Adrenal gland (tissue), 19 donors: ENCODE measurements at regions of chr15 and their contacts with region 1.

Region 1: DNA sequence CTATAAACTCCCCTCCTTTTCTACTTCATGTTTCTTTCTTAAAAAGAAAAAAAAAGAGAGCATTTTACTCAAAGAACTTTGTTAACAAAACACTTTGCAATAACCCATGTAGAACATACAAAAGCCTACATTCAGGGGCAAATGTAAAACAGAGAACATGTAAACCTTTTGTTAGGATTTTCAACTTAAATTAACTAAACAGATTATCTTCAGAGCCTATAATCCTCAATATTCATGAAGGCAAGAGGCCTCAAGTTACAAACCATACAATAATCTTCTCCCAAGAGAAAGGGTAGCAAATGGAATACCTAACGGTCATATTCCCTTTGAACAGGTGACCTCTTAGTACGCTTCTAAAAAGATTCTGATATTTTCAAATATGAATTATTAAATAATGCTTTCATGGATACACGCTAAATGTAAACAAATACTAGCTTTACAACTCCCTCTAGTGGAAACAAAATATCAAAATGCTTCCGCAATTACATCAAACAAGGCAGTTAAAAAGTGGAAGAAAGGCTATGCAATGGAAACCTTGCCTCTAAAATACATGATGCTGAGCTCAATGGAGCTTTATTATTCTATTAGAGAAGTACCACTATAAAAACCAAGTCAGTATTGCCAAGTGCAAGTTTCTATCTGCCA is 9.9 kb downstream of the CEP152 start:
- DNase-seq: no peak
- H3K4me3 ChIP-seq: no peak overlapping the region
- H3K27ac ChIP-seq: peak overlapping the region in 1 of 5 donors; percentile 3
- H3K4me1 ChIP-seq: peaks cover 0 to 7% of the 10 kb centered on the region in 2 donors
- H3K27me3 ChIP-seq: no peaks in the 10 kb centered on the region
- CTCF ChIP-seq: peak; percentile 25 to 69 (median 55)
- POLR2A ChIP-seq: no peak

Region 2: DNA sequence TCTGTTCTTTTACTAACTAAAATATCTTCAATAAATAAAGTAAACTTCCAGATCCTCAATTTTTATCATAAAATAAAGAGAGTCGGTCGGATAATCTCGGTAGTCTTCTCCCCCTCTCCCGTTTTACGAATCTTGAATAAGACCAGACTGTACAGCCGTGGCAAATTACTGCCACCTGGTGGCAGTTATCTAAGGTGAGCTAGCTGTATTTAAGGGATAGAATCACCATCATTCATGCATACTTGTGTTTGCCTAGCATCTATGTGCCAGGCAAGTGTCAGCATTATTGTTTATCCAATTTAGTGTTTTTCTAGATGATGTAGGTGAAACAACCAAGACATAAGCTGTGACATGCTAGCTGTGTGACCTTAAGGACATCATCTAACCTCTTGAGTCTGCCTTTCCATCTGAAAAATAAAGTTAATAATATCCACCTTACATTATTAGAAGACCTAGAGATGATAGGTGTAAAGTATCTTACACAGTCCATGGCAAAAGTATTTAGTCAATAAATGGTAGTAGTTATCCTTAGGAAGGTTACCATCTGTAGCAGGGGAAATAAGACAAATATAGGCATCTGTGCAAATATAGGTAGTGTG is 448.4 kb before region 1 on chr15:
- intact Hi-C with region 1: loop called in 1 of 2 experiments (anchors 10 kb)
- DNase-seq: peak; percentile 46 to 75 (median 59)
- H3K4me3 ChIP-seq: no peak overlapping the region
- H3K27ac ChIP-seq: no peak overlapping the region
- H3K4me1 ChIP-seq: no peaks in the 10 kb centered on the region
- H3K27me3 ChIP-seq: no peaks in the 10 kb centered on the region
- CTCF ChIP-seq: peak; percentile 44 to 79 (median 66)
- POLR2A ChIP-seq: no peak

Region 3: DNA sequence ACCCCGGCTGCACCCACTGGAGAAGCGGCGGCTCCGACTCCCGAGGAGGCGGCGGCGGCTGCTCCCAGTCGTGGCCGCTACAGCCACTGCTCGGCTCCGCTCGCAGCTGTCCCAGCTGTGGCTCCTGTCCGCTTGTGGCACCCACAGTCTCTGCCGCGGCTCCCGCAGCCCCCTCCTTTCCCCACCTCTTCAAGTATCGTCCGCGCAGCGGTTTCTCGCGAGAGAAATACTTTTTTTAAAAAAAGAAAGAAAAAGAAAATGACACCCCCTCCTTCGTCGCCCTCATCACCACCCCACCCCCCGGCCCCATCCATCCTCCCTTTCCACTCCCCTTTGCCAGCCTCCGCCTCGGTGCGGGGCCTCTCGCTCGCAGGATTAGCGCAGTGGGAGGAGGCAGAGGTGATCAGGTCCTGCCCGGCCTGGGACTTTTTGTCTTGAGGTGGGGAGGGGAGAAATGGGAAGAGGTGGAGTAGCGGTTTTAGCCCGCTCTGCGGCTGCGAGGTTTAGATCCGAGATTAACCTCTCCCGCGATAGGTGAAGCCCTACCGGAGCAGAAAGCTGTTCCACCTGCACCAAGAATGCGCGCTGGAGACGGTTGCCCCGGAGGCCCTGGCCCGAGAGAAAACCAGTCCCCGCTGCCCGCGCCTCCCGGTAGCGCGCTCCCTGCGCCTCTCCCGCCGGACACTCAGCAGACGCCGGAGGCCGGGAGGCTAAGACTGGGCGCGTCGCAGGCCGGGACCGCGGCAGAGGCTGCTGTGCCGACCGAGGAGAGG is 155.2 kb before region 1 on chr15 and contains the start of gene FBN1:
- intact Hi-C with region 1: loop called in 1 of 2 experiments (anchors 10 kb)
- DNase-seq: peak; percentile 81 to 89 (median 85)
- H3K4me3 ChIP-seq: peak within 1 kb of the TSS; percentile 74 to 91 (median 82)
- H3K27ac ChIP-seq: peak within 1 kb of the TSS; percentile 58 to 94 (median 86)
- H3K4me1 ChIP-seq: peaks cover 12 to 29% of the 10 kb centered on the region in 2 donors
- H3K27me3 ChIP-seq: no peaks in the 10 kb centered on the region
- CTCF ChIP-seq: no peak
- POLR2A ChIP-seq: peak; percentile 60 to 94
- total RNA-seq, gene FBN1: 30.2 to 84.6 (median 61.0) TPM

Region 4: DNA sequence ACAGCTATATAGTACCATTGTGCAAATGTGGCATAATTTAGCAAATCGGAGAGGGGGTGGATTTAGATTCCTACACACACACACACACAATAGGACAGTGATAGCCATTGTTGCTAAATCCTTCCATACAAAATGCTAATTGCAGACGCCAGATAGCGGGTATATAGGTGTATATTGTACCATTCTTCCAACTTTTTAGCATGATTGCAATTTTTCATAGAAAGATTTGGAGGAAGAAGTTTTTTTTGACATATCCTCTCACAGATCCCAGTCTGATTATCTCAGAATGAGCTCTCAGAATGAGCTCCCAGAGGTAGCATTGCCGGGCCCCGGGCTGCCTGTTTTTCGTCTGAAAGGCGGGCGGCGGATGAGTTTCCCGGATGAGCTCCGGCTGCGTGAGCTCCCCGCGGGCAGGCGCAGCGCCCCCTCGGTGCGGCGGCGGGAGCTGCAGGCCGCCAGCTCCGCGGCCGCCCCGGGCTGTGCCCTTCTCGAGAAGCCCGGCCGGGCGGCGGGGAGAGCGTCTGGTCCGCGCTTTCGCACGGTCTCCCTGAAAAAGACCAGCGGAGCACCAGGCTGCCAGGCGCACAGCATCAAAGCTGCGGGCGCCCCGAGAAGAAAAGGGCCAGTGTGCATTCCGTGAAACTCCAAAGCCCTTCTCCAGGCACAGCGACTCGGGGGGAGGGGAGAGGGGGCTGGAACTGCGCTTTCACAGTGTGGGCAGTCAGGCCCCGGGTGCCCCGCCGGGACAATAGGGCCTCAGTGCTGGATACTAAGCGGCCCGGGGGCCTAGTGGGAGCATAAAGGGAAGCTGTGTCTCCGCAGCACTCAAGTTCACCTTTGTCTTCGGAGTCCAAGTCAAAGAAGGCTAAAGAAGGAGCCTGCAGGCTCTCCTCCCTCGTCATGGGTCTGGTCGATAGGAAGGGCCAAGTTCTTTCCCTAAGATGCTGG is 174.8 kb after region 1 on chr15:
- intact Hi-C with region 1: no loop called
- DNase-seq: peak; percentile 79 to 90 (median 85)
- H3K4me3 ChIP-seq: peak overlapping the region in 2 of 4 donors; percentile 37 to 57
- H3K27ac ChIP-seq: peak overlapping the region in 2 of 5 donors; percentile 52
- H3K4me1 ChIP-seq: peaks cover 0 to 6% of the 10 kb centered on the region in 2 donors
- H3K27me3 ChIP-seq: no peaks in the 10 kb centered on the region
- CTCF ChIP-seq: peak; percentile 27 to 98 (median 69)
- POLR2A ChIP-seq: no peak